OCI-LY7 (cell line): ENCODE measurements at regions of chr6 and their contacts with region 1.

Region 1: DNA sequence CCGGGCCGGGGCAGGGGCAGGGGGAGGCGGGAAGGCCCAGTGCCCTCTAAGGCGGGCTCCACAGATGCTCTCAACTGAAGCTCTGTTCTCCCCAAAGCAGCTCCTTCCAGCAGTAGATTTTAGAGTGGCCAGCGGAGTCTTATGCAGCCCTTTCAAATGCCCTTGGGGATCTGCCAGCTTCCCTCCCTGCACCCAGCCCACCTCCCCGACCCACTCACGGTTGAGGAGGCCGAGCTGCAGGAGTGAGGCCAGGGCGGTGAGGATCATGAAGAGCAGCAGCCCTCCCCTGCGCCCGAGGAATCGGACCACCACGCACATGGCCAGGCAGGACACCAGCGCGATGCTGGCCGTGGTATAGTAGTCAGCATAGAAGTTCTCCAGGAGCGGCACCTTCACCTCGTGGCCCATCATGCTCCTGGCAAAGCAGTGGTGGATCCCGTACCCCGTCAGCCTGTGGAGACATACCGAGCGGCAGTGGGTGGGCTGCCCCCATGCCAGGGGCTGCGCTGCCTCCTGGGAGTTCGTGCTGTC is 28.0 kb downstream of the PSMG4 start:
- DNase-seq: no peak
- H3K4me3 ChIP-seq: no peak overlapping the region
- H3K27ac ChIP-seq: no peak overlapping the region
- H3K4me1 ChIP-seq: no peaks in the 10 kb centered on the region
- CTCF ChIP-seq: no peak

Region 2: GRCh38 chr6:3312604-3313231 is 26.0 kb after region 1 on chr6:
- CTCF ChIA-PET with region 1: no interaction called
- POLR2A ChIA-PET with region 1: no interaction called
- intact Hi-C with region 1: no loop called
- DNase-seq: no peak
- H3K4me3 ChIP-seq: no peak overlapping the region
- H3K27ac ChIP-seq: no peak overlapping the region
- H3K4me1 ChIP-seq: no peaks in the 10 kb centered on the region
- CTCF ChIP-seq: no peak

Region 3: DNA sequence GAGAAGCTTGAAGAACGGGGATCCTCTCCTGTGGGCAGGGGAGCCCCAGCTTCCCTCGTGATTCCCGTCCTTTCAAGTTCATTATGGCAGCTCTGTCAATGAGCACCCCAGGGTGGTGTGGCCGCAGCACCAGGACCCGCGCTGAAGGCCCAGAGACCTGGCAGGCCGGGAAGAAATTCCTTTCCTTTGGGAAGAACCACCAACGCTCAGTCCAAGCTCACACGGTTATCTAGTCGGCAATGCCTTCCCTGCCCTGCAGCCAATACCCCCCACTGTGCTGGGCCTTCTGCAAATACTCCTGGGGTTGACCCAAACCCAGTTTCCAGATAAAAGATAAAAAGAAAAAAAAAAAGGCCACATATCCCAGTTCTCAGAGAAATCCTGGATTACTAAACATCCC is 436.0 kb after region 1 on chr6:
- CTCF ChIA-PET with region 1: interaction called, 10 read pairs
- POLR2A ChIA-PET with region 1: no interaction called
- intact Hi-C with region 1: no loop called
- DNase-seq: no peak
- H3K4me3 ChIP-seq: no peak overlapping the region
- H3K27ac ChIP-seq: no peak overlapping the region
- H3K4me1 ChIP-seq: no peaks in the 10 kb centered on the region
- CTCF ChIP-seq: no peak